CD14-positive monocyte (primary cell): ENCODE measurements at regions of chr3 and their contacts with region 1.

Region 1: GRCh38 chr3:134485718-134486576 is at the starts of genes ANAPC13 and CEP63:
- DNase-seq: peak; percentile 91 to 98 (median 97)
- H3K4me3 ChIP-seq: peak within 1 kb of the TSS; percentile 85 to 95 (median 94)
- H3K4me3 Mint-ChIP-seq: peak within 1 kb of the TSS; percentile 96
- H3K27ac ChIP-seq: peak within 1 kb of the TSS; percentile 96 to 99
- H3K27ac Mint-ChIP-seq: peak within 1 kb of the TSS; percentile 96 to 100 (median 99)
- H3K4me1 ChIP-seq: peaks cover 41 to 48% of the 10 kb centered on the region in 2 donors
- H3K4me1 Mint-ChIP-seq: peaks cover 47% of the 10 kb centered on the region
- H3K27me3 ChIP-seq: no peaks in the 10 kb centered on the region
- H3K27me3 Mint-ChIP-seq: peaks cover 0 to 3% (median 0%) of the 10 kb centered on the region in 3 donors
- CTCF ChIP-seq: no peak
- polyA plus RNA-seq, gene ANAPC13: 33.5 to 102 (median 92.4) TPM
- polyA plus RNA-seq, gene CEP63: 11.1 to 18.8 (median 17.2) TPM

Region 2: GRCh38 chr3:133805527-133806475 is 680.1 kb before region 1 on chr3 and contains the start of gene SRPRB:
- intact Hi-C with region 1: loop called in 1 of 2 experiments (anchors 10 kb)
- DNase-seq: peak; percentile 88 to 92 (median 91)
- H3K4me3 ChIP-seq: peak within 1 kb of the TSS; percentile 82 to 94 (median 89)
- H3K4me3 Mint-ChIP-seq: peak within 1 kb of the TSS; percentile 94 to 97
- H3K27ac ChIP-seq: peak within 1 kb of the TSS; percentile 19 to 73
- H3K27ac Mint-ChIP-seq: peak within 1 kb of the TSS; percentile 73 to 91 (median 87)
- H3K4me1 ChIP-seq: peaks cover 16% of the 10 kb centered on the region in 2 donors
- H3K4me1 Mint-ChIP-seq: peaks cover 23% of the 10 kb centered on the region
- H3K27me3 ChIP-seq: no peaks in the 10 kb centered on the region
- H3K27me3 Mint-ChIP-seq: peaks cover 3 to 7% (median 6%) of the 10 kb centered on the region in 3 donors
- CTCF ChIP-seq: no peak
- polyA plus RNA-seq, gene SRPRB: 6.1 to 30.6 (median 29.9) TPM

Region 3: DNA sequence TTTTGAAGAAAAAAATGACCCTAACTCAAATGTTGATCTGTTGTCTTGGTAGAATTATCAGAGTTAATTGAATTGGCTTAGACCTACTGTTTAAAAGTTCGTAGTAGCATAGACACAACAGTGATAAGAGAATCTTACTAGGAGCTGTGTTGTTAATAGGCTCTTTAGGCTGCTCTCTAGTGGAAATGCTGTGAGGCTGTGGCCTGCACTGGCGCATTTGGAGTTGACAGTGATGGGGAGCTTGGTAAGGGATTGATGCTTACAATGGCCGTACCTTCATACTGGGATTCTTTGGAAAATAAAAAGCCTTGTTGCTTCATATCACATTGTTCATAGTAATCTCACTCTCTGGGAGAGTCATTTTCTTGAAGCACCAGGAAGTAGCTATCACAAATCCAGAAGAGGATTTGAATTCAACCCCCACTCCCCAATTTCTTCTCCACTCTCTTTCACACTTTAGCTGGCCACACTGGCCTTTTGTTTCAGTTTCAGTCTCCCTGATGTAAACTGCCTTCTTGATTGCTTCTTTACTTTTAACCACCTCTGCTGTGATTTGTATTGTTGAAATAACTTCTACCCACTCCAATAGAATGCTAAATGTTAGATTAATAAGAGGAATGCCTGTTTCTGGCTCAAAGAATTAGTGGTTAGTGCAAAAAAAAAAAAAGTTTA is 56.5 kb after region 1 on chr3:
- intact Hi-C with region 1: loop called (anchors 2 to 10 kb)
- DNase-seq: no peak
- H3K4me3 ChIP-seq: peak overlapping the region in 1 of 3 experiments; percentile 38
- H3K4me3 Mint-ChIP-seq: peak overlapping the region in 1 of 2 donors; percentile 36
- H3K27ac ChIP-seq: peak overlapping the region in 1 of 2 donors; percentile 85
- H3K27ac Mint-ChIP-seq: peak overlapping the region; percentile 75 to 89 (median 79)
- H3K4me1 ChIP-seq: peaks cover 41 to 45% of the 10 kb centered on the region in 2 donors
- H3K4me1 Mint-ChIP-seq: peaks cover 28% of the 10 kb centered on the region
- H3K27me3 ChIP-seq: no peaks in the 10 kb centered on the region
- H3K27me3 Mint-ChIP-seq: no peaks in the 10 kb centered on the region
- CTCF ChIP-seq: no peak